Activated CD4-positive, alpha-beta memory T cell treated with anti-CD3 and anti-CD28 coated beads, Interleukin-2, amount 10 ng/mL, durations not matched to agents 7 days and 5 days (primary cell): ENCODE measurements at regions of chr9 and their contacts with region 1.

Region 1: GRCh38 chr9:114291064-114291474 is 31.8 kb upstream of the ORM1 start:
- DNase-seq: peak; percentile 73
- H3K4me3 Mint-ChIP-seq: no peak overlapping the region
- H3K27ac Mint-ChIP-seq: no peak overlapping the region
- H3K4me1 Mint-ChIP-seq: no peaks in the 10 kb centered on the region
- H3K27me3 Mint-ChIP-seq: peaks cover 6% of the 10 kb centered on the region

Region 2: DNA sequence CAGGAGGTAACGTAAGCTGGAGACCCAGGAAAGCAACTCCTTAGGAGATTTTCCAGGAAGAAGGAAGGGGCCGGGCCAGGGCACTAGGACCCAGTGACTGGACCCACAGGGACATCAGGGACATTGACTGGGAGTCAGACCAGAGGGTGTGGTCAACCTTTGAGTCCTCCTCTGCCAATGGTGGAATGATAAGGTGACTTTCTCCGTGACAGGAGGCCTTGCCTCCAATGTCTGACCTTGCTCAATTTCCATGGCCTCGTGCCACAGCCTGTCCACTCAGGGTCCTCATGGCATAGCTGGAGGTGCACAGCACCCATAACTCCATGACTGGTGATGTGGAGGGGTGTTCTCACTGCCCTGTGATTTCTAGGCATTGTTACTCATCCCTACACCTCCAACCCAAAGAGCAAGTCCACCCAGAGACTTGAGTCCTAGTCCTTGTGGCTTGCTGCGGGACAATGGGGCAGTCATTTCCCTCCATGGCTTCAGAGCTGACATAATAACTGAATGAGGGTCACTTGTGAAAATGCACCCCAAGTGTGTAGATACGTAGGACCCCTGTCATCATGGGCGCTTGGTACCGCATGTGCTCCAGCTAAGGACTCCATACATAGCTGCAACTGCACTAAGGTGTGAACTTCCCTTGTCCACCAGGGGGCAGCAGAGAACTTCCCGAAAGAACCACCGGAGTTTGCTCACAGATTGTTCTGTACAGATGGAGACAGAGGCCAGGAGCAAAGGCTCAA is 208.9 kb before region 1 on chr9:
- CTCF ChIA-PET with region 1: interaction called, 20 read pairs
- POLR2A ChIA-PET with region 1: interaction called, 5 read pairs
- DNase-seq: peak; percentile 79
- H3K4me3 Mint-ChIP-seq: no peak overlapping the region
- H3K27ac Mint-ChIP-seq: no peak overlapping the region
- H3K4me1 Mint-ChIP-seq: no peaks in the 10 kb centered on the region
- H3K27me3 Mint-ChIP-seq: peaks cover 2% of the 10 kb centered on the region

Region 3: GRCh38 chr9:114108016-114108833 is 182.8 kb before region 1 on chr9:
- CTCF ChIA-PET with region 1: interaction called, 34 read pairs
- POLR2A ChIA-PET with region 1: no interaction called
- DNase-seq: peak; percentile 64
- H3K4me3 Mint-ChIP-seq: no peak overlapping the region
- H3K27ac Mint-ChIP-seq: no peak overlapping the region
- H3K4me1 Mint-ChIP-seq: no peaks in the 10 kb centered on the region
- H3K27me3 Mint-ChIP-seq: peaks cover 12% of the 10 kb centered on the region